ENCODE measurements at regions of chr7 and their contacts with region 1.

Region 1: GRCh38 chr7:130721486-130722280 is 12.3 kb downstream of the KLF14 start:
- DNase-seq: peak; percentile 69
- ATAC-seq: peak; percentile 100
- H3K4me3 ChIP-seq: no peak overlapping the region
- H3K27ac ChIP-seq: no peak overlapping the region
- H3K4me1 ChIP-seq: no peaks in the 10 kb centered on the region
- H3K27me3 ChIP-seq: peaks cover 25% of the 10 kb centered on the region
- CTCF ChIP-seq: peak; percentile 79
- POLR2A ChIP-seq: no peak
- RAD21 ChIP-seq: peak; percentile 85

Region 2: DNA sequence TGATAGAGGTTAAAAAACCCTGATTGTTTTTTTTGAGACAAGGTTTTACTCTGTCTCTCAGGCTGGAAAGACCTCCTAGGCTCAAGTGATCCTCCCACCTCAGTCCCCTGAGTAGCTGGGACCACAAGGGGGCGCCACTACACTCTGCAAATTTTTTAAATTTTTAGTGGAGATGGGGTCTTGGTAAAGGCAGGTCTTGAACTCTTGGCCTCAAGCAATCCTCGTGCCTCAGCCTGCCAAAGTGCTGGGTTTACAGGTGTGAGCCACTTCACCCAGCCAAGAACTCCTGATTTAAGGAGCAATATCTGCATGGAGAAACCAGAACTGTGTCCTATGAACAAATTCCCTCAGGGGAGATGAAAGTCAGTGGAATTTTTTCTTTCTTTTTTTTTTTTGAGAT is 658.6 kb before region 1 on chr7:
- CTCF ChIA-PET with region 1: no interaction called
- POLR2A ChIA-PET with region 1: no interaction called
- dilution Hi-C with region 1: no loop called
- in situ Hi-C with region 1: loop called (anchors 10 kb)
- intact Hi-C with region 1: loop called (anchors 2 kb)
- DNase-seq: peak; percentile 31
- ATAC-seq: peak; percentile 50; the same call in 1 of the 2 replicates
- H3K4me3 ChIP-seq: no peak overlapping the region
- H3K27ac ChIP-seq: no peak overlapping the region
- H3K4me1 ChIP-seq: peaks cover 4% of the 10 kb centered on the region; the same call in 1 of the 2 replicates
- H3K27me3 ChIP-seq: no peaks in the 10 kb centered on the region; the same call in 1 of the 2 replicates
- CTCF ChIP-seq: peak; percentile 66
- POLR2A ChIP-seq: no peak
- RAD21 ChIP-seq: peak; percentile 52

Region 3: GRCh38 chr7:130419658-130420057 is 302.0 kb before region 1 on chr7:
- CTCF ChIA-PET with region 1: no interaction called
- POLR2A ChIA-PET with region 1: no interaction called
- dilution Hi-C with region 1: no loop called
- in situ Hi-C with region 1: no loop called
- intact Hi-C with region 1: no loop called
- DNase-seq: peak; percentile 6
- ATAC-seq: no peak
- H3K4me3 ChIP-seq: no peak overlapping the region
- H3K27ac ChIP-seq: no peak overlapping the region
- H3K4me1 ChIP-seq: peaks cover 2% of the 10 kb centered on the region; the same call in 1 of the 2 replicates
- H3K27me3 ChIP-seq: no peaks in the 10 kb centered on the region
- CTCF ChIP-seq: no peak
- POLR2A ChIP-seq: no peak
- RAD21 ChIP-seq: no peak

Region 4: DNA sequence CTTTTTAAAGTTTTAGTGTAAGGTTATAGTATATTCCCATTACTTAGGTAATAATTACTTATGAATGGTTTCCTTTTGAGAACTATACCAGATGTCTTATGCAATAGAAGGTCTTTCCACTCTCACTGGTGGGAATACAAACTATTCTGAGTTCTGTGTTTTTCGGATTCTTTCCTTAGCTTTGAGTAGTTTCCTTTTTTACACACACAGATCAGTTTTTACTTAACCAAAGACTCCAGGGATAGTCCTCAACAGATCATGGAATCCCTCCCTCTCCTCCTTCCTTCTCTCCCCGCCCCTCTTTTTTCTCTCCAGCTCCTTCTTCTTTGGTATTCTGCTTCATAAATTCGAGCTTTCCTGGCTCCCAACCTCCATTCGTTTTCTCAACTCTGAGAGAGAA is 66.4 kb before region 1 on chr7:
- CTCF ChIA-PET with region 1: no interaction called
- POLR2A ChIA-PET with region 1: no interaction called
- dilution Hi-C with region 1: no loop called
- in situ Hi-C with region 1: no loop called
- intact Hi-C with region 1: no loop called
- DNase-seq: no peak
- ATAC-seq: no peak
- H3K4me3 ChIP-seq: no peak overlapping the region
- H3K27ac ChIP-seq: no peak overlapping the region
- H3K4me1 ChIP-seq: peaks cover 2% of the 10 kb centered on the region; the same call in 1 of the 2 replicates
- H3K27me3 ChIP-seq: no peaks in the 10 kb centered on the region
- CTCF ChIP-seq: no peak
- POLR2A ChIP-seq: no peak
- RAD21 ChIP-seq: no peak

Measured in IMR-90 (cell line).